ENCODE measurements at regions of chr11 and their contacts with region 1.

Region 1: DNA sequence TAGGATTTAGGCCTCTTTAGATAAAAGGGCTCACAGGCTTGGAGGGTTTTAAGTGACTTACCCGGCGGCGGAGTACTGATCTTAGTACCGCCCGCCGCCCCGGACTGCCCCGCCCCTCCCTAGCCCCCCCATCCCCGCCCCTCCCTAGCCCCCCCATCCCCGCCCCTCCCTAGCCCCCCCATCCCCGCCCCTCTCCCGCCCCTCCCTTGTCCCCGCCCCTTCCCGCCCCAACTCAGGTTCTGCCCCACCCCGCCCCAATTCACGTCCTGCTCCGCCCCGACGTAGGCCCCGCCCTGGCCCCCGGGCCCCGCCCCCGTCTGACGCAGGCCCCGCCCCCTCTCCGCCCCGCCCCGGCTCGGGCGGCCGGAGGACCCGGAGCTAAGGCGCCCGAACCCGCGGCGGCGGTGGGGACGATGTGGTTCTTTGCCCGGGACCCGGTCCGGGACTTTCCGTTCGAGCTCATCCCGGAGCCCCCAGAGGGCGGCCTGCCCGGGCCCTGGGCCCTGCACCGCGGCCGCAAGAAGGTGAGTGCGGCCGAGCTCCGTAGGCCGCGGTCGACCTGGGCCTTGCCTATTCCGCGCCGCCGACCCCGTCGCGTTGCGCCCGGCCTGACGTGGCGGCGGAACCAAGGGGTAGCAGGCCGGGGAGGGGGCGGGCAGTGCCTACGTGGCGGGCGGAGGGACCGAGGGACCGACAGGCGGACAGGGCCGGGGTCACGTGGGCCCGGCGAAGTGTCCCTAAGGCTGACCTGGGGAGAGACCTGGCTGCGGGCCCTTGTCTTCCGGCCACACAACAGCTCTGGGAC is at the start of gene SCYL1:
- DNase-seq: peak; percentile 83 to 93 (median 87)
- ATAC-seq: peak; percentile 65 to 94 (median 90)
- H3K4me3 ChIP-seq: peak within 1 kb of the TSS; percentile 82 to 100 (median 99)
- H3K27ac ChIP-seq: peak within 1 kb of the TSS; percentile 69 to 97 (median 93)
- H3K4me1 ChIP-seq: peaks cover 0 to 36% (median 20%) of the 10 kb centered on the region in 12 donors
- H3K27me3 ChIP-seq: no peaks in the 10 kb centered on the region
- CTCF ChIP-seq: peak in 1 of 12 donors; percentile 4
- POLR2A ChIP-seq: peak; percentile 29 to 75
- total RNA-seq, gene SCYL1: 51.6 to 135 (median 62.2) TPM

Region 2: GRCh38 chr11:65111744-65112414 is 413.1 kb before region 1 on chr11 and contains the start of gene TM7SF2:
- intact Hi-C with region 1: loop called in 1 of 10 experiments (anchors 5 kb)
- DNase-seq: peak; percentile 96 to 98 (median 97)
- ATAC-seq: peak; percentile 85 to 93 (median 86)
- H3K4me3 ChIP-seq: peak within 1 kb of the TSS; percentile 38 to 90 (median 61)
- H3K27ac ChIP-seq: peak within 1 kb of the TSS in 11 of 12 donors; percentile 52 to 86 (median 79)
- H3K4me1 ChIP-seq: peaks cover 0 to 62% (median 43%) of the 10 kb centered on the region in 12 donors
- H3K27me3 ChIP-seq: peaks cover 0 to 5% (median 0%) of the 10 kb centered on the region in 9 donors
- CTCF ChIP-seq: no peak
- POLR2A ChIP-seq: peak; percentile 73 to 96
- total RNA-seq, gene TM7SF2: 25.1 to 752 (median 78.6) TPM

Region 3: DNA sequence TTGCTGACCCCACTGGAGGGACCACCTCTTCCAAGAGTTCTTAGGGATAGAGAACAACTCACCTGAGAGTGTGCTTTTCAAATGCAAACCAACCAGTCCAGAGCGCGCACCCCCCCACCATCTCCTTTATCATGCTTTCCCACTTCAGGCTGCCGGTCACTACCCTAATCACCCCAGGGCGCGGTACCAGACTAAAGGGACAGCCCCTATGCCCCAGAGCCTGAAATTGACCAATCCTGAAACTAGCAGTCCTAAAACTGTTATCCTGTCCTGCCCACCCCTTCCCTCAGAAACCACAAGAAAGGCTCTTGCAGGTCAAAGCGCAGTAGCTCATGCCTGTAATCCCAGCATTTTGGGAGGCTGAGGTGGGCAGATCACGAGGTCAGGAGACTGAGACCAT is 65.4 kb before region 1 on chr11:
- intact Hi-C with region 1: loop called in 1 of 10 experiments (anchors 2 kb)
- DNase-seq: no peak
- ATAC-seq: no peak
- H3K4me3 ChIP-seq: no peak overlapping the region
- H3K27ac ChIP-seq: no peak overlapping the region
- H3K4me1 ChIP-seq: peaks cover 0 to 14% (median 8%) of the 10 kb centered on the region in 12 donors
- H3K27me3 ChIP-seq: no peaks in the 10 kb centered on the region
- CTCF ChIP-seq: no peak
- POLR2A ChIP-seq: no peak